ENCODE measurements at regions of chr4 and their contacts with region 1.

Region 1: GRCh38 chr4:94595879-94596483 is 144.2 kb downstream of the PDLIM5 start:
- DNase-seq: no peak
- ATAC-seq: no peak
- H3K4me3 Mint-ChIP-seq: no peak overlapping the region
- H3K27ac Mint-ChIP-seq: no peak overlapping the region
- H3K4me1 Mint-ChIP-seq: no peaks in the 10 kb centered on the region
- H3K27me3 Mint-ChIP-seq: no peaks in the 10 kb centered on the region
- CTCF ChIP-seq: peak; percentile 26

Region 2: GRCh38 chr4:94304365-94304971 is 291.5 kb before region 1 on chr4:
- CTCF ChIA-PET with region 1: no interaction called
- POLR2A ChIA-PET with region 1: no interaction called
- intact Hi-C with region 1: loop called (anchors 1 kb)
- DNase-seq: no peak
- ATAC-seq: no peak
- H3K4me3 Mint-ChIP-seq: no peak overlapping the region
- H3K27ac Mint-ChIP-seq: no peak overlapping the region
- H3K4me1 Mint-ChIP-seq: no peaks in the 10 kb centered on the region
- H3K27me3 Mint-ChIP-seq: no peaks in the 10 kb centered on the region
- CTCF ChIP-seq: no peak

Region 3: GRCh38 chr4:94406668-94407437 is 189.1 kb before region 1 on chr4:
- CTCF ChIA-PET with region 1: interaction called, 7 read pairs
- POLR2A ChIA-PET with region 1: no interaction called
- intact Hi-C with region 1: loop called (anchors 1 kb)
- DNase-seq: no peak
- ATAC-seq: peak; percentile 52
- H3K4me3 Mint-ChIP-seq: no peak overlapping the region
- H3K27ac Mint-ChIP-seq: no peak overlapping the region
- H3K4me1 Mint-ChIP-seq: no peaks in the 10 kb centered on the region
- H3K27me3 Mint-ChIP-seq: peaks cover 10% of the 10 kb centered on the region
- CTCF ChIP-seq: peak; percentile 86

Measured in activated B cell treated with CpG ODN at 0.5 μM for 24 hours (primary cell).